ENCODE measurements at regions of chrX and their contacts with region 1.

Region 1: DNA sequence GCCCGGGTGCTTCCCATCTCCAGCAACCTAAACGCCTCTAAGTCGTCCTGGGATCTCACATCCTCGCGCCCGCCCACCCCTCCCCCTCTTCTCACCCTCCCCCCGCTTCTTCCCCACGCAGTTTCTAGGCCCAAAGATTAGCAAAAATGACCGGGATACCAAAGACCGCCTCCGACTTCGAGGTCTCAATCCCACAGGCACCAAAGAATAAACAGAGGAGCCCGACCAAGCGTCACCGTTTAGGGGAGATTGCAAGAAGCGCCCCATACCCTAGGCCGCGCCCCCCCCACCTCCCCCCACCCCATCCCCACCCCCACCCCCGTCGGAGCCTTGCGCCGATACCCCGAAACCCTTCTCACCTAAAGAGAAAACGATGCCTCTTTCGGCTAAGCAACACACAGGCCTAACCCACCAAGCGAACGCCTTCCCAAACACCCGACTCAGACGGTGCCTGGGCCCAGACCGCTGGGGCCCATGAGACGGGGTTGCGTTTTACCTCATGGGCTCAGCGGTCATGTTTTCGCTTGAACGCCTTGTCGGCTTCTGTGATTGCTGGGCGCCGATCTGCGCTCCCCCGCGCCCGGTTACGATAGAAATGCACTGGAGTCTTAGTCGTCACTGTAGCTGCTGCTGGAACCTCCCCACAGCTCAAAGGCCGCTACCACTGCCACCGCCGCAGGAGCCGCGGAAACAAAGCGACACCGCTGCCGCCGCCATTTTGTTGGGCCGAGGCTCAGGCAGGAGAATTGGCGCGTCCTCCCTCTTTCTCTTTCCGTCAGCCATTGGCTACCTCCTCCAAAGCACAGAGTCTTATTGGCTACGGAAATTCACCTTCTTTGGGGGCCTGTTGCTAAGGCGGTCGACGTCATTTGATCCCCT is at the start of gene ATRX:
- DNase-seq: peak; percentile 44 to 76 (median 64)
- H3K4me3 ChIP-seq: peak within 1 kb of the TSS; percentile 34 to 80 (median 64)
- H3K27ac ChIP-seq: peak within 1 kb of the TSS; percentile 71 to 97 (median 91)
- H3K27me3 ChIP-seq: peaks cover 0 to 27% (median 5%) of the 10 kb centered on the region in 45 donors
- CTCF ChIP-seq: no peak
- total RNA-seq, gene ATRX: 105 to 210 (median 142) TPM

Region 2: GRCh38 chrX:77668391-77669237 is 117.1 kb before region 1 on chrX:
- intact Hi-C with region 1: loop called in 1 of 2 experiments (anchors 10 kb)
- DNase-seq: no peak
- H3K4me3 ChIP-seq: no peak overlapping the region
- H3K27ac ChIP-seq: no peak overlapping the region
- H3K27me3 ChIP-seq: peaks cover 0 to 40% (median 7%) of the 10 kb centered on the region in 45 donors
- CTCF ChIP-seq: no peak

Measured in dorsolateral prefrontal cortex (tissue), 120 donors.